Esophagus muscularis mucosa (tissue), 4 donors: ENCODE measurements at regions of chr13 and their contacts with region 1.

Region 1: DNA sequence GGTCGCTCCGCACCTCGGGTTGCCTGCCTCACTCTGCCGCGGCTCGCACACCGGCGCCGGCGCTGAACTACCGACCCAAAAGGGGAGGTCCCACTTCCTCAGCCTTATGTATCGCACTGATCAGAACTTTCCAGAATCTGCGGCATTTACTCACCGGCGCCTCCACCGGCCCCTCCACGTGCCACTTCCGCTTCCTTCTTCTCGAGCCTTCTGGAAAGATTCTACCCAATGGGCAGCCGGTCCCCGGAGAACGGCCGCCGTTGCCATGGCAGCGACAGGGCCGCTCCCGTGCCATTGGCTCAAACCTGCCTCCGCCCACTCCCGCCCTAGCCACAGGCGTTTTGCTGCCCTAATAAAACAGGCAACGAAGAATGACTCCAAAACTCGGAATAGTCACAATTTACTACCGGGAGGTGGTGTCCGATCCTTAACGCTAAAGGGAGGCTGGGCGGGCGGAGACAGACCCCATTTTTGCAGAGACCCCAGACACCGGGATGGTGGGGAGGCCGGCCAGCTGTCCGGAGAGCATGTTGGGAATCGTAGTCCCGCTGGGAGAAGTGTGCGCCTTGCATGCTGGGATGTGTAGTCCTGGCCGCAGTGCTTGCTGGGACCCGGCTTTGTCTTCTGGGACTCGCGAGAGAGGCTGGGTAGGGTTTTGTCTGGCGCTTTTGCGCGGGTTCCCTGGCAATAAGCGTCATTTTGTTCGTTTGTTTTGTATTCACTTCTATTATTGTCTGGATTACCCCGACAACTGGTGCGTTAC is at the start of gene HSPH1:
- DNase-seq: peak; percentile 99
- H3K4me3 ChIP-seq: peak within 1 kb of the TSS; percentile 64 to 87 (median 75)
- H3K27ac ChIP-seq: peak within 1 kb of the TSS; percentile 85 to 95 (median 92)
- H3K4me1 ChIP-seq: peaks cover 15 to 31% (median 29%) of the 10 kb centered on the region in 4 donors
- H3K27me3 ChIP-seq: no peaks in the 10 kb centered on the region
- CTCF ChIP-seq: peak in 2 of 3 experiments; percentile 18 to 35
- EP300 ChIP-seq: no peak
- POLR2A ChIP-seq: peak; percentile 36
- total RNA-seq, gene HSPH1: 33.4 to 48.2 (median 42.1) TPM

Region 2: GRCh38 chr13:30125422-30126073 is 1036.5 kb before region 1 on chr13:
- intact Hi-C with region 1: loop called (anchors 10 kb)
- DNase-seq: no peak
- H3K4me3 ChIP-seq: no peak overlapping the region
- H3K27ac ChIP-seq: peak overlapping the region; percentile 52 to 74 (median 62)
- H3K4me1 ChIP-seq: peaks cover 7 to 34% (median 33%) of the 10 kb centered on the region in 4 donors
- H3K27me3 ChIP-seq: no peaks in the 10 kb centered on the region
- CTCF ChIP-seq: no peak
- EP300 ChIP-seq: no peak
- POLR2A ChIP-seq: no peak

Region 3: GRCh38 chr13:31115616-31116015 is 46.4 kb before region 1 on chr13:
- intact Hi-C with region 1: no loop called
- DNase-seq: peak; percentile 90
- H3K4me3 ChIP-seq: no peak overlapping the region
- H3K27ac ChIP-seq: no peak overlapping the region
- H3K4me1 ChIP-seq: no peaks in the 10 kb centered on the region
- H3K27me3 ChIP-seq: peaks cover 0 to 5% (median 0%) of the 10 kb centered on the region in 4 donors
- CTCF ChIP-seq: no peak
- EP300 ChIP-seq: no peak
- POLR2A ChIP-seq: no peak

Region 4: DNA sequence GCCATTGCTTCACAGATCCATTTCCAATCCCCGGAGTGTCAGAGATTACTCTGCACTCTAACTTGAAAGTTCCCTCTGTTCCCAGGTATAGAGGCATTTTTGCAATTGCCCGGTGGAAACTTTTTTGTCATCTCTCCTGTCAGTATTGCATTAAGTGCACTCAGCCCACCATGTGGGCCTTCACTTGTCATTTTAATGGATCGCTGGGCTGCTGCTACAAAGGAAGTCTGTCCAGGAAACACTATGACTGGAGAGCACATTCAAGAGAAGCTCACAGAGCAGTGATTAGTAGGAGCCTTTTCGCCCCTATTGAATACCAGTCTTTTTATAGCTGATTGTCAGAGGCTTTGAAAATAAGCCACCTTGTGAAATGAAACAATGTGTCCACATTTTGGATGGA is 218.7 kb after region 1 on chr13:
- intact Hi-C with region 1: no loop called
- DNase-seq: no peak
- H3K4me3 ChIP-seq: no peak overlapping the region
- H3K27ac ChIP-seq: no peak overlapping the region
- H3K4me1 ChIP-seq: no peaks in the 10 kb centered on the region
- H3K27me3 ChIP-seq: no peaks in the 10 kb centered on the region
- CTCF ChIP-seq: no peak
- EP300 ChIP-seq: no peak
- POLR2A ChIP-seq: no peak